Left cardiac atrium (tissue), 4 donors: ENCODE measurements at regions of chr12 and their contacts with region 1.

Region 1: DNA sequence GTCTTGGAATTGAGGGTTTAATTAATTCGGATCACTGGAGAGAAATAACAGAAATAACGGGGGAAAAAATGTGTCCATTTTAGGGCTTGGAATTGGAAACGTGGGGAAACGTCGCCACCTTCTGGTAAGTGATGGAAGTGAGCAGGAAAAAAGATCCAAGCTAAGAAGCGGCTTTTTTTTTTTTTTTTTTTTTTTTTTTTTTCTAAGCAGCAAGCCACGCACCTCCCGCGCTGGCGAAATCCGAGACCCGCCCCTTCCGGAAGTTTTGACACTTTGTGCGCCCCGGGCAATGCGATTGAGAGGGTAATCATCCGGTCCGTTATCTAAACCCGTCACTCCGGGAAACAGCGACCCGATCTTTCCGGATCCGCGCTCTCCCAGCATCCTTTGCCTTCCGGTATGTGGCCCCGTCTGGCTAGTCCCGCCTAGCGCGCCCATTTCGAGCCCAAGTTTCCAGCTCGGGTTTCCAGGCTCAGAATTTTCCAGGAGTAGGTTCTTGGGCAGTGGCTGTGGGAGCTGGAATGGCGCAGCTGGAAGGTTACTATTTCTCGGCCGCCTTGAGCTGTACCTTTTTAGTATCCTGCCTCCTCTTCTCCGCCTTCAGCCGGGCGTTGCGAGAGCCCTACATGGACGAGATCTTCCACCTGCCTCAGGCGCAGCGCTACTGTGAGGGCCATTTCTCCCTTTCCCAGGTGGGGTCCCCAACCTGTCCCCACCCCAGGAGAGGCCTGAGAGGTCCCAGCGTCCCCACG is at the start of gene ALG10:
- DNase-seq: peak; percentile 96
- ATAC-seq: peak; percentile 100
- total RNA-seq, gene ALG10: 6.0 to 6.6 TPM

Region 2: DNA sequence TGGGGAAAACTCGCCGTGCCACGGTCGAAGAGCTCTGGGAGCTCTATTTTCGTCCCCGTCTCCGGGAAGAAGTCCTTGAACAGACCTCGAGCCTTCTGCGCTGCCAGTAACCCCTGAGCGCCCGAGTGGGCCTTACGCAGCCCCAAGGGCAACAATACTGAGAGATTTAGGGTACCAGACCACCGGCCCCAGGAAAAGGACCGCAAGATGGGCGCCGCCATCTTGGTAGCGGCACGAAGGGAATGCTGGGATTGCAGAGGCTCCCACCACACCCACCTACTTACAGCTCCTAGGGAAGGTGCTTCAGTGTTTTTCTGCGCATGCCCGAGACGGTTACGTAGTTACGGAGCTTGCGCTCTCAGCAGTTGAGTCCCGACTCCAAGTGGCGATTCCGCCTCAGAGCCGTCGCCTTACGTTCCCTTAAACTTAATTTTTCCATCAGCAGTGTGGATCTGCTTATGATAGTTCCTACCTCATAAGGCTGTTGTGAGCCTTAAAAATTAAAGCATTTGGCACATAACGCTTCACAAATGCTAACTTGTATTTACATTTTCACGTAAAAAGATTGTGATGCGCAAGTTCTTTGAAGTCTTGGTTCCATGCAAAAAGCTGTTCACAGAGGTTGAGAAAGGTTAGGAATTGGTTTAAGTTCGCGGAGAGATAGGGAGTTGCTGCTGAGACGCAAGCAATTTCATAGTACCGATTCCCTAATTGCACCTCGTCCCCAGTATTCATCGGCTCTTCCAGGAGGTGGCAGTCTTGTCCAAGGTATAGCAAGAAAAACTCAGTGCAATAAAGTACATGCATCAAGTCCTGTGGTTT is 1266.4 kb before region 1 on chr12 and contains the start of gene YARS2:
- intact Hi-C with region 1: loop called (anchors 5 kb)
- DNase-seq: peak; percentile 97
- ATAC-seq: peak; percentile 99 to 100
- total RNA-seq, gene YARS2: 10.2 to 10.3 TPM

Region 3: GRCh38 chr12:33440477-33440876 is 581.8 kb before region 1 on chr12:
- intact Hi-C with region 1: loop called in 1 of 2 experiments (anchors 5 kb)
- DNase-seq: no peak
- ATAC-seq: no peak